ENCODE measurements at regions of chr19 and their contacts with region 1.

Region 1: GRCh38 chr19:47145639-47146486 is 15.2 kb downstream of the SAE1 start:
- DNase-seq: no peak
- H3K4me3 ChIP-seq: no peak overlapping the region
- H3K27ac ChIP-seq: no peak overlapping the region
- H3K4me1 ChIP-seq: no peaks in the 10 kb centered on the region
- H3K27me3 ChIP-seq: no peaks in the 10 kb centered on the region
- CTCF ChIP-seq: no peak

Region 2: DNA sequence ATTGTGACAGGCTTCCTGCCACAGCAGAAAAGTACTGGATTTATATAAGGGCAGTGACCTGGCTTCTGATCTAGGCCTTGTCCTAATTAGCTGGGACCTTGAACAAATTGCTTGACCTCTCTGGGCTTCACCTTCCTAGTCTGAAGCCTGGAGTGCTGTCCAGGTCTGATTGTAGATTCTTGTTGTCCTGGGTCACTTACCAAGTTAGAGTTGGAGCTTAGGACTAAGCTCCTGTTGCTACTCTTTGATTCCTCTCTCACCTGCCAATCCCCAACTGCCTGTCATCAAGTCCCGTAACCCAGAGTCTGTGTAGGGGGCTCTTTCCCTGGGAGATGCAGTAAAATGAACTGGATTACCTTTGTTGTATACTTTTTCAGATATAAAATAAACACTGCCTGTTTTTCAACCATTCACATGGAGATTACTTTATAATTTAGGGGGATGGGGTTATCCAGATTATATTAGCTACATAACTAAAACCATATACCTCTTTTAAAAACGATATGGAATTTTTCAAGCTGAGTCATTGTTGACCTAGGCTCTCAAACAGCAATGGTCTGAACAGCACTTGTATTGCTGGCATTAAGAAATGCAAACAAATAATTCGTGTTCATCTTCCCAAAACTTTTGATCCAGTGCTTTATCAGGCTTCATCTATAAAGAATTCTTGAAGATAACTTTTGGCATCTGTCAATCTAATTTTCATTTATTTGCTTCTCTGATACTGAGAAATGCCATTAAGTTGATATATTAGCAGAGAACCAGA is 279.3 kb before region 1 on chr19:
- intact Hi-C with region 1: no loop called
- DNase-seq: no peak
- H3K4me3 ChIP-seq: no peak overlapping the region
- H3K27ac ChIP-seq: peak overlapping the region in 1 of 2 donors; percentile 58
- H3K4me1 ChIP-seq: peaks cover 3 to 78% (median 51%) of the 10 kb centered on the region in 4 donors
- H3K27me3 ChIP-seq: no peaks in the 10 kb centered on the region
- CTCF ChIP-seq: no peak

Region 3: GRCh38 chr19:47186446-47187334 is 40.8 kb after region 1 on chr19:
- intact Hi-C with region 1: no loop called
- DNase-seq: no peak
- H3K4me3 ChIP-seq: no peak overlapping the region
- H3K27ac ChIP-seq: no peak overlapping the region
- H3K4me1 ChIP-seq: peaks cover 0 to 53% (median 33%) of the 10 kb centered on the region in 4 donors
- H3K27me3 ChIP-seq: no peaks in the 10 kb centered on the region
- CTCF ChIP-seq: no peak

Region 4: GRCh38 chr19:47210689-47211316 is 64.9 kb after region 1 on chr19:
- intact Hi-C with region 1: loop called (anchors 5 kb)
- DNase-seq: peak; percentile 85 to 92
- H3K4me3 ChIP-seq: no peak overlapping the region
- H3K27ac ChIP-seq: peak overlapping the region; percentile 51 to 52
- H3K4me1 ChIP-seq: peaks cover 0 to 6% (median 1%) of the 10 kb centered on the region in 4 donors
- H3K27me3 ChIP-seq: no peaks in the 10 kb centered on the region
- CTCF ChIP-seq: peak; percentile 79 to 93

Region 5: GRCh38 chr19:47221080-47221841 is 75.4 kb after region 1 on chr19:
- intact Hi-C with region 1: no loop called
- DNase-seq: no peak
- H3K4me3 ChIP-seq: no peak overlapping the region
- H3K27ac ChIP-seq: no peak overlapping the region
- H3K4me1 ChIP-seq: peaks cover 0 to 8% (median 2%) of the 10 kb centered on the region in 4 donors
- H3K27me3 ChIP-seq: no peaks in the 10 kb centered on the region
- CTCF ChIP-seq: no peak

Region 6: DNA sequence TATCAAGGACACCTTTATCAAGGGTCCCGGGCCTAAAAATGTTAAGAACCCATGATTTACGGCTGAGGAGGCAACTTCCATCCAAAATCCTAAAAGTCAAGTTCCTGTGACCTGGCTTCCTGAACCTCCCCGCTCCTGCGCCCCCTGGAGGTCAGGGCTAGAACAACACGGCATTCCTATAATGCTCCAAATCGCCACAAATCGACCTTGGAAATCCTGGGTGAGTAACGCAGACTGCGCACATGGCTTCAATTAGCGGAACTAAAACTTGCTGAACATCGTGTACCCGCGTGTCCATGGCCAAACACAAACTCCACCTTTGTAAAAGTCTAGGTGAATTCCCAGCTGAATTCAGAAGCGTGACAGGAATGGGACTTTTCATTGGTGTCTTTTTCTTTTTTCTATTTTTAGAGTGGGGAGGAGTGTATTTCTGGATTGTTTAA is 159.5 kb after region 1 on chr19:
- intact Hi-C with region 1: no loop called
- DNase-seq: peak; percentile 71 to 90
- H3K4me3 ChIP-seq: no peak overlapping the region
- H3K27ac ChIP-seq: peak overlapping the region in 1 of 2 donors; percentile 16
- H3K4me1 ChIP-seq: peaks cover 0 to 38% (median 12%) of the 10 kb centered on the region in 4 donors
- H3K27me3 ChIP-seq: no peaks in the 10 kb centered on the region
- CTCF ChIP-seq: peak; percentile 81 to 92